ENCODE measurements at regions of chr11 and their contacts with region 1.

Region 1: GRCh38 chr11:105328061-105328460 is 188.5 kb upstream of the CARD18 start:
- DNase-seq: peak in 1 of 3 donors; percentile 8
- H3K4me3 ChIP-seq: no peak overlapping the region
- H3K4me3 Mint-ChIP-seq: no peak overlapping the region
- H3K27ac ChIP-seq: no peak overlapping the region
- H3K27ac Mint-ChIP-seq: peak overlapping the region in 1 of 7 donors; percentile 36
- H3K4me1 ChIP-seq: peaks cover 0 to 5% of the 10 kb centered on the region in 2 donors
- H3K4me1 Mint-ChIP-seq: peaks cover 10% of the 10 kb centered on the region
- H3K27me3 ChIP-seq: no peaks in the 10 kb centered on the region
- H3K27me3 Mint-ChIP-seq: peaks cover 0 to 2% (median 0%) of the 10 kb centered on the region in 3 donors
- CTCF ChIP-seq: no peak

Region 2: DNA sequence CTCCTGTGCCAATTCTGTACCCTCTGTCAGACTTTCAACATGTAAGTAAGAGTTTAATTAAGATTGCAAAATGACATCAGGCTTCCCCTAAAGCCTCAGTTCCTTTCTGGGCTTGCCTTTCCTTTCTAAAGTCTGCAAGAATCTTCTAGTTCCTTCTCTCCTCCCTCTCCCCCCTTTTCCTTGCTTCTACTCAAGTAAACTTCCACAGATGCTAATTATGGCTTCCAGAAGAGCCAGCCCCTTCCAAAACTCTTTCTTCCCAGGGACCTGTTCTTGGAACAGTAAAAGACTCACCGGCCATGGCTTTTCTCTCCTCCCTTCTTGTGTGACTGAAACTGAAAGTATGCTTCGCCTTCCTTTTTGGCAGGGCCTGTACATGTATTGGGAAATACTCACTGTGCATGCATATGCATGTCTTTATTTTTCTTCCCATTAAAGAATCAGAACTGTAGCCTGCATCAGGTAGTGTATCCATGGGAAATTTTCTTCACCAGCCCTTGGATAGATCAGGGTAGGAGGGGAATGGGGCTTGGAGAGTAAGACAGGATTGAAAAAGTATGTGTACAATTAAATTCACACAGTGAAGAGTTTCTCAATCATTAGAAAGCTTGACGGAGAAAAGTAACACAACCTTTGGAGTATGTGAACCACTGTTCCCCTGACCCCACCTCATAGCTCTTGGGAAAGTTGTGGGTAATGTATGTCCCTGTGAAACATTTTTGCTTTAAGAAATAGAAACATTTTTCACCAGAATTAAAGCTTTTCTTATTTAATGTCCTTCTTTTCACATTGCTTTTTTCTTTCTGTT is 293.0 kb before region 1 on chr11 and contains the start of gene CASP1:
- intact Hi-C with region 1: no loop called
- DNase-seq: peak; percentile 59 to 83 (median 76)
- H3K4me3 ChIP-seq: peak within 1 kb of the TSS; percentile 59 to 99 (median 81)
- H3K4me3 Mint-ChIP-seq: peak within 1 kb of the TSS; percentile 98 to 99
- H3K27ac ChIP-seq: peak within 1 kb of the TSS; percentile 69 to 89
- H3K27ac Mint-ChIP-seq: peak within 1 kb of the TSS; percentile 89 to 100 (median 99)
- H3K4me1 ChIP-seq: peaks cover 40 to 74% of the 10 kb centered on the region in 2 donors
- H3K4me1 Mint-ChIP-seq: peaks cover 64% of the 10 kb centered on the region
- H3K27me3 ChIP-seq: no peaks in the 10 kb centered on the region
- H3K27me3 Mint-ChIP-seq: peaks cover 0 to 1% (median 0%) of the 10 kb centered on the region in 3 donors
- CTCF ChIP-seq: no peak
- polyA plus RNA-seq, gene CASP1: 210 to 460 (median 433) TPM

Region 3: DNA sequence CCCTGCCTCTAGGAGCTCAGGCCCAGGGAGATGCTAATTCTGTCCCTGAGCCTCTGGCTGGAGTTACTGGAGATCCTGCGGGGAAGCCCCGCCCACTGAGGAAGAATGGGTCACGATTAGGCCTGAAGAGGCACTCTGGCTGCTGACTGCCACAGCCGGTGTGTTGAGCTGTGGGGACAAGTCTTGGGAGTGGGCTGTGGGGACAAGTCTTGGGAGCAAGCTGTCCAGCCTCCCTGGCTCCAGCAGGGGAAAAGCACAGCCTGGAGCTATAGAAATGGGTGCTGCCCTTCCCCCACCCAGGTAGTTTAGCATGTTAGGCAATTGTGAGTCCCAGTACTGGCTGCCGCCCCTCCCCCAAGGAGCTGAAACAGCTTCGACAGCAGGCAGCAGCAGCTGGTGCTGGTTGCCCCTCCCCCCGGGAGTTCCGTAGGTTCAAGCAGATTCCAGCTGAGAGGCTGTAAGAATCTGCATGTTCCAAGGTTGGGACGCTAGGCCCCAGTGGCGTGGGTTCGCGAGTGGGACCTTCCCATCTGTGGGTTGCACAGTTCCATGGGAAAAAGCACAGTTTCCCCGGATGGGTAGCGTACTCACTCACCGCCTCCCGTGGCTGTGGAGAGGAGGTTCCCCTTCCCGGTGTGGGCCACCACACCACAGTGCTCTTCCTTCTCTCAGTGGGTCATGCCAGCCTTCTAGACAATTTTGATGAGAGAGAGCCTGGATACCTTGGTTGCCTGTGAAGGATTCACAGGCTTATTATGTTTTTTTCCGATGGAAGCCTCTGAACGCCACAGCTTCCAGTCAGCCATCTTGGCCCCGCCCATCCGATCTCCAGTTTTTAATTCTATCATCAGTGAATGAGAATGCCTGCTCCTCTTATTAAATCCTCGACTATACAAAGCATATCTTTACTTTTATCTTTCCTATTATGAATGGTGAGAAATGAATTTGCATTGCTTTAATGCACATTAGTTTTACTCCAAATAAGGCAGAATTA is 632.5 kb after region 1 on chr11:
- intact Hi-C with region 1: loop called in 1 of 2 experiments (anchors 5 kb)
- DNase-seq: no peak
- H3K4me3 ChIP-seq: no peak overlapping the region
- H3K4me3 Mint-ChIP-seq: no peak overlapping the region
- H3K27ac ChIP-seq: no peak overlapping the region
- H3K27ac Mint-ChIP-seq: no peak overlapping the region
- H3K4me1 ChIP-seq: no peaks in the 10 kb centered on the region
- H3K4me1 Mint-ChIP-seq: no peaks in the 10 kb centered on the region
- H3K27me3 ChIP-seq: no peaks in the 10 kb centered on the region
- H3K27me3 Mint-ChIP-seq: peaks cover 0 to 1% (median 1%) of the 10 kb centered on the region in 3 donors
- CTCF ChIP-seq: no peak

Measured in CD14-positive monocyte (primary cell).